Heart left ventricle (tissue), 16 donors: ENCODE measurements at regions of chr6 and their contacts with region 1.

Region 1: DNA sequence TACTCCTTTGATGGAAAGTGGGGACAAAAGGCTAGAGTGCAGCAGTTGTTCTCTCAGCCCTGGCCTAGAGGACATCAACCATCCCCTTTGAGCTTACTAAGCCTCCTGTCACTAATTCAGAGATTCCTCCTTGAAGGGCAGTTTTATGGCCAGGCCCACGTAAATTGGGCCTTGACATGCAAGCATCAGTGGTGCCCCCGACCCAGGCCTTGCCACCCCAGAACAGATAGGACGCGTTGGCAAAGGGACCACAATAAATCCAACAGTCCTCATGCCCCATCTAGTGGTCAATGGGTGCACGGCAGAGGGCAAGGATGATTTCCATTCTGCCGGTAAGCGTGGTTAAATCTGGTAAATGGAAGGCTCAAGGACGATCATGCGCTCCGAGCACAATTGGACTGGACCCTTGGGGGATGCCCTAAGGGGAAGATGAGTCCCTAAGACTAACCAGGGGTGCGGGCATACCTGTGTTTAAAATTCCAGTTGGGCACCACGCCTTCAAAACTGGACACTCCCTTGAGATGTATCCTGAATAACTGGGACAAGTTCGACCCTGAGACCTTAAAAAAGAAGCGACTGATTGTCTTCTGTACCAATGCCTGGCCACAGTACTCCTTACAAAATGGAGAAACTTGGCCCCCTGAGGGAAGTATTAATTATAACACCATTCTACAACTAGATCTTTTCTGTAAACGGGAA is 32.6 kb downstream of the CEP85L start:
- DNase-seq: peak in 4 of 5 donors; percentile 33 to 55 (median 53)
- ATAC-seq: peak; percentile 71 to 86 (median 83)
- H3K4me3 ChIP-seq: peak overlapping the region in 1 of 12 donors; percentile 14
- H3K27ac ChIP-seq: no peak overlapping the region
- H3K4me1 ChIP-seq: peaks cover 0 to 33% (median 11%) of the 10 kb centered on the region in 12 donors
- H3K27me3 ChIP-seq: no peaks in the 10 kb centered on the region
- CTCF ChIP-seq: peak; percentile 81 to 92 (median 88)
- POLR2A ChIP-seq: no peak

Region 2: GRCh38 chr6:117976030-117976651 is 642.7 kb before region 1 on chr6:
- intact Hi-C with region 1: loop called in 2 of 10 experiments (anchors 5 to 10 kb)
- DNase-seq: no peak
- ATAC-seq: no peak
- H3K4me3 ChIP-seq: no peak overlapping the region
- H3K27ac ChIP-seq: no peak overlapping the region
- H3K4me1 ChIP-seq: peaks cover 0 to 6% (median 0%) of the 10 kb centered on the region in 12 donors
- H3K27me3 ChIP-seq: no peaks in the 10 kb centered on the region
- CTCF ChIP-seq: peak; percentile 46 to 72 (median 60)
- POLR2A ChIP-seq: no peak

Region 3: GRCh38 chr6:118551063-118552053 is 67.5 kb before region 1 on chr6:
- intact Hi-C with region 1: loop called in 1 of 10 experiments (anchors 5 kb)
- DNase-seq: no peak
- ATAC-seq: peak; percentile 41 to 64 (median 64)
- H3K4me3 ChIP-seq: peak overlapping the region; percentile 27 to 64 (median 54)
- H3K27ac ChIP-seq: peak overlapping the region; percentile 27 to 87 (median 78)
- H3K4me1 ChIP-seq: peaks cover 0 to 14% (median 0%) of the 10 kb centered on the region in 12 donors
- H3K27me3 ChIP-seq: no peaks in the 10 kb centered on the region
- CTCF ChIP-seq: peak; percentile 31 to 77 (median 58)
- POLR2A ChIP-seq: no peak

Region 4: DNA sequence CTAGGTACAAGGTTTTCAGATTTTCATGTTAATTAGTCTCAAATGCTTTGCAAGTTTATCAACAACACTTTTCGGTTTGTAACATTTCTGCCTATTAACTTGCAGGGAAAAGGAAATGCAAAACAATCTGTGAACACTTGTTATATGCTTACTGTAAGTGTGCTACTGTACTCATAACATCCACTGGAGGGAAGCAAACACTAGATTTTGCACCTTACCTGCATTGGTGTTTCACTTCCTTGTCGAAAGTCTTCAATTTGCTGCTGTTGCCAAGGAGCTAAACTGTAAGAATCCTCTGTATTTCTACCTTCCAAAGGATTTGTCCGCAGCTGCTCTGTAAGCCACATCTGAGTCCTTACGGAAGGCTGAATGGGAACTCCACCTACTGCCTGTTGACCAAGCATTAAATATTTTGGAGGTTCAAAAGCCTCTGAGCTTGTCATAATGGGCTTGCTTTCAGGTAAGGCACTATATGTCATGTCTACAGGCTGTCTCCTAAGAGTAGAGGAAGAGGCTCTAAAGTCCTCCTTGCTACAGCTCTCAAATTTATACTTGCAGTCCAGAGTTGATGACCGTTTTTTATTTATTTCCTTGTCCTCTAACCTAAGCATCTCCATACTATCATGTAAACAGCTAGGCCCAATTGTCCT is 53.4 kb before region 1 on chr6:
- intact Hi-C with region 1: loop called in 1 of 10 experiments (anchors 10 kb)
- DNase-seq: no peak
- ATAC-seq: peak in 3 of 4 donors; percentile 34 to 42 (median 37)
- H3K4me3 ChIP-seq: no peak overlapping the region
- H3K27ac ChIP-seq: no peak overlapping the region
- H3K4me1 ChIP-seq: peaks cover 0 to 20% (median 1%) of the 10 kb centered on the region in 12 donors
- H3K27me3 ChIP-seq: no peaks in the 10 kb centered on the region
- CTCF ChIP-seq: peak in 10 of 12 donors; percentile 21 to 55 (median 34)
- POLR2A ChIP-seq: no peak

Region 5: DNA sequence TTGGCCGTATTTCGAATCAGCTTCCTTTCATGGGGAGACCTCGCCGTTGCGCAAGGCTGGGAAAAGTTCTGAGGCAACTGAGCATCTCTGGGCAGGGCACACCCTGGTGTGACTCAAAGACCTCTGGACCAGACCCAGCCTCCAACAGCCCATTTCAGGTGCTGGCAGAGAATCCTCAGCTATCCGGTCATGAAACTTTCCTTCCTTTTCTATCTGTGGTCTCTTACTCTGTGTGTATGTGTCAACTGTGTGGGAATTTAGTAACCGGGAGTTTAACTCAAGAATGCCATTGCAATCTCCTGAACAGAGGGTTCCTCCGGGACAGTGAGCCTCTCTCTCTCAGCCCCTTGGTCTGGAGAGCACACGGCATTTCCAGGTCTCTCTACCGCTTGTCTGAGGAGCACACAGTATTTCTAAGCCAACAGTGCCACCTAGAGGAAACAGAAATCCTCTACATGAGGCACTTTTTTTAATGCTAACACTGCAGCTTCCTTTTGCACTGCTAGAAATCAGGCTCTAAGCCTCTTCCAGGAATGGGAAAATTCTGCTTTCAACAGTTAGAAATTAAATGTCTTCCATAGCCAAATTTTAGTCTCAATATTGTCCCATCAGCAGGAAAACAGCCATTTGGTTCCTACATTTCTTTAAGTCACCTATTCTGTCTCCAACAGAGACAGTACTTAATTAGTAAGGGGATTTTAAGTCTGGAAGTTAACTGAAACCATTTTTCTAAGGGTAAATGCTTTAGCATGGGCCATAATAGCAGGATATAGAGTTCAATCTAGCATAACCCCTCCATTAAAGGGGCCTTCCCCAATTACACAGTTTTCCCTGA is 38.0 kb before region 1 on chr6:
- intact Hi-C with region 1: loop called in 2 of 10 experiments (anchors 5 kb)
- DNase-seq: peak in 3 of 5 donors; percentile 30 to 51 (median 35)
- ATAC-seq: peak; percentile 76 to 95 (median 92)
- H3K4me3 ChIP-seq: peak overlapping the region in 1 of 12 donors; percentile 13
- H3K27ac ChIP-seq: peak overlapping the region in 1 of 12 donors; percentile 46
- H3K4me1 ChIP-seq: peaks cover 0 to 20% (median 4%) of the 10 kb centered on the region in 12 donors
- H3K27me3 ChIP-seq: no peaks in the 10 kb centered on the region
- CTCF ChIP-seq: peak; percentile 54 to 76 (median 69)
- POLR2A ChIP-seq: no peak

Region 6: DNA sequence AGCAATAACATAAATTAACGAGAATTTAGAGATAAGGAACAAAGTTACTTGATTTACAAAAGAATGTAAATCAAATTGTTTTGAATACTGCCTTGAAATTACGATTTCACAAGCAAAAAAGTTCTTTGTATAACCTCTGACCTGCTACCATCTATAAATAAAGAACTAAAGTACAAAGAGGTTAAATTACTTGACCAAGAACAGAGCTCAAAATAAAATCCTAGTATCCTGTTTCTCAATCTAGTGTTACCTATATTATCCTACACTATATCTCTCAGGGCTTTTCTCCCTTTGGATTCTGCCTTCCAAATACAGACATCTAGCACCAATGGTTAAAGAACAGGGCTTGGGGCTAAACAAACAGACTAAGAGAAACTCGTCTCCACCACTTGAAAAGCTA is 26.9 kb before region 1 on chr6:
- intact Hi-C with region 1: no loop called
- DNase-seq: no peak
- ATAC-seq: no peak
- H3K4me3 ChIP-seq: no peak overlapping the region
- H3K27ac ChIP-seq: no peak overlapping the region
- H3K4me1 ChIP-seq: peaks cover 0 to 31% (median 5%) of the 10 kb centered on the region in 12 donors
- H3K27me3 ChIP-seq: no peaks in the 10 kb centered on the region
- CTCF ChIP-seq: no peak
- POLR2A ChIP-seq: no peak

Region 7: GRCh38 chr6:118776607-118777549 is 158.1 kb after region 1 on chr6:
- intact Hi-C with region 1: loop called in 1 of 10 experiments (anchors 10 kb)
- DNase-seq: peak in 4 of 5 donors; percentile 33 to 61 (median 56)
- ATAC-seq: peak; percentile 51 to 81 (median 76)
- H3K4me3 ChIP-seq: peak overlapping the region in 6 of 12 donors; percentile 9 to 32 (median 30)
- H3K27ac ChIP-seq: no peak overlapping the region
- H3K4me1 ChIP-seq: peaks cover 0 to 26% (median 5%) of the 10 kb centered on the region in 12 donors
- H3K27me3 ChIP-seq: no peaks in the 10 kb centered on the region
- CTCF ChIP-seq: peak; percentile 66 to 85 (median 75)
- POLR2A ChIP-seq: no peak